MCF 10A (cell line): ENCODE measurements at regions of chr1 and their contacts with region 1.

Region 1: DNA sequence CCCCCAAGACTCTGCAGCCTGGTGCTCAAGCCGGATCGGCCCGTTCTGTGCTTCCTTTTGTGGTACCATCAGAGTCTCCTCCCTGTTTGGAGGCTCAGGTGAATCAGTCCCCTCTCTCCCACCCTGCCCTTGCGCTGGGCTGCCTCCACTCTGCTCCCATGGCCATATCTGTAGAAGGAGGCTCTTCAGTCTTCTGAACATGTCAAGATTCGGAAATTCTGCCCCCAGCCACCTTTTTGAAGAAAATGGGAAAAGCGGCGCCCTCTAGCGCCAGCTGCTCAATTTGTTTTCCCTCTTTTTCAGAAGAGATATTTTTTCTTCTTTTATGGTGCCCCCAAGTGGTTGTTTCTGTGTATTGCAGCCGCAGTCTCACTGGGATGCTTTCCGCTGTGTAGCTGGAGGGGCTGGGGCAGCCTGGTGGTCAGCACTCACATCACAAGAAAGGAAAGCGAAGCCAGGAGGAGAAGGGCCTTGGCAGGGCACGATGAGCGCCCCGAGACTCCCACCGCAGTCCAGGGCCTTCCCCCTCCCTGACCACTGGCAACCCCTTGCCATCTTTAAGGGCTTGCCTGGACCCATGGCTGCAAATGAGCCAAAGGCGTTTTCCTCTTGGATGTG is 58.4 kb upstream of the CACNA1E start:
- DNase-seq: peak; percentile 84
- H3K4me3 Mint-ChIP-seq: peak overlapping the region; percentile 56
- H3K27ac Mint-ChIP-seq: no peak overlapping the region
- H3K4me1 Mint-ChIP-seq: peaks cover 8% of the 10 kb centered on the region
- H3K27me3 Mint-ChIP-seq: peaks cover 38% of the 10 kb centered on the region
- CTCF ChIP-seq: peak; percentile 100

Region 2: DNA sequence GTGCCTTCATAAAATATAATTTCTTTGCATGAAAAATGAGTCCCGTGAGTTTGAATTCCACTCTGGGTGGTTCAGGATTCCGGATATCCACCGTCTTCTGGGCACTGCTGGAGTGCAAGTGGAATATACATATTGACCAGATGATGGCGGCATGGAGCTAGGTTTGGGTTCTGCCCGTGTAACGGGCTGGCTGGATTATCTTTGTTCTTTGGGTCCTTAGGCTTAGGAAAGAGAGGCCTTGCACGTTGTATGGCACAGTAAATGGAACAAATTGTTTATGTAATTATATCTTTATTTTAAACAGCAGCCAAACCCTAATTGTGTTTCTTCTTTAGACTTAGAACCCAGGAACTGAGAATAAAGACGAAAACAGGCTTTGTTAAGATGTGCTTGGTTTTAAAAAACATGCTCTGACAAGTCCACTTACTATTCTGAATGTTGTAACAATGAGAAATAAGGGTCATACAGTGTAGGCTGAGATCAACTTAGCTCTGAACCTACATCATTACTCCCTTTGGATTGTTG is 909.0 kb before region 1 on chr1:
- CTCF ChIA-PET with region 1: interaction called, 3 read pairs
- POLR2A ChIA-PET with region 1: no interaction called
- intact Hi-C with region 1: loop called (anchors 10 kb)
- DNase-seq: peak; percentile 95
- H3K4me3 Mint-ChIP-seq: no peak overlapping the region
- H3K27ac Mint-ChIP-seq: peak overlapping the region; percentile 91
- H3K4me1 Mint-ChIP-seq: peaks cover 7% of the 10 kb centered on the region
- H3K27me3 Mint-ChIP-seq: no peaks in the 10 kb centered on the region
- CTCF ChIP-seq: peak; percentile 98

Region 3: DNA sequence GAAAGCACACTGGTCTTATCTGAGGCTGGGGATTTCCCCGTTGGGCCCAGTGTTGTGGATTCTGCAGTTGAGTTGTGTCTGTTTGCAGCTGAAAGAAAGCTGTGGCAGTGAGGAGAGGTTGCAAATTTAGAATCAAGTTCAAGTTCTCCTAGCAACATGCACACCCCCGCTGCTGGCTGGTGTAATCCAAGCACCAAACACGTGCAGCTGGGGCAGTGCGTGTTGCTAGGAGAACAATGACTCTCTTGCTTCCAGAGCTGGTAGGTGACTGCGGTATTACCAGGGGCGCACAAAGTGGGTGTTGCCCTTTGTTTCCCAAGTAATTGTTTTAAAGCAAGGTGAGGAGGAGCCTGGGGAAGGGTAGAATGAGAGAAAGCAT is 244.9 kb before region 1 on chr1:
- CTCF ChIA-PET with region 1: interaction called, 271 read pairs
- POLR2A ChIA-PET with region 1: interaction called, 3 read pairs
- intact Hi-C with region 1: no loop called
- DNase-seq: peak; percentile 45
- H3K4me3 Mint-ChIP-seq: no peak overlapping the region
- H3K27ac Mint-ChIP-seq: no peak overlapping the region
- H3K4me1 Mint-ChIP-seq: peaks cover 9% of the 10 kb centered on the region
- H3K27me3 Mint-ChIP-seq: peaks cover 24% of the 10 kb centered on the region
- CTCF ChIP-seq: no peak

Region 4: DNA sequence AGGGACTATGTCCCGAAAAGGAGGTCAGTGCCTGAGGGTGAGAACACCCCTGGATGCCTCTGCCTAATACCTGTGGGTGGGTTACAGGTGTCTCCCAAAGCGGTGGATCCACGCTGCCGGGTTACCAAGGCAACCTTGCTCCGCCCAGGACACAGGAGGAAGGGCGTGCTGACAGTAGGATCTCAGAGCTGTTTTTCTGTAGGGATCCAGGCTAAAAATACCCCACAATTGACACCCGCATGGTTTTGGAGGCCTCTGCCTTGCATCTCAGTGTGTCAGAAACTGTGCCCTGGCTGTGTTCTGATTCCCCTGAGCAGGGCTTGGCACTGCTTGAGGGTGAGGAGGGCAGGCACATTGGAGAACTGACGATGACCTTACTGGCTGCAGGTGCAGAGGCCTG is 218.4 kb before region 1 on chr1:
- CTCF ChIA-PET with region 1: interaction called, 11 read pairs
- POLR2A ChIA-PET with region 1: no interaction called
- intact Hi-C with region 1: no loop called
- DNase-seq: no peak
- H3K4me3 Mint-ChIP-seq: no peak overlapping the region
- H3K27ac Mint-ChIP-seq: no peak overlapping the region
- H3K4me1 Mint-ChIP-seq: no peaks in the 10 kb centered on the region
- H3K27me3 Mint-ChIP-seq: no peaks in the 10 kb centered on the region
- CTCF ChIP-seq: no peak

Region 5: DNA sequence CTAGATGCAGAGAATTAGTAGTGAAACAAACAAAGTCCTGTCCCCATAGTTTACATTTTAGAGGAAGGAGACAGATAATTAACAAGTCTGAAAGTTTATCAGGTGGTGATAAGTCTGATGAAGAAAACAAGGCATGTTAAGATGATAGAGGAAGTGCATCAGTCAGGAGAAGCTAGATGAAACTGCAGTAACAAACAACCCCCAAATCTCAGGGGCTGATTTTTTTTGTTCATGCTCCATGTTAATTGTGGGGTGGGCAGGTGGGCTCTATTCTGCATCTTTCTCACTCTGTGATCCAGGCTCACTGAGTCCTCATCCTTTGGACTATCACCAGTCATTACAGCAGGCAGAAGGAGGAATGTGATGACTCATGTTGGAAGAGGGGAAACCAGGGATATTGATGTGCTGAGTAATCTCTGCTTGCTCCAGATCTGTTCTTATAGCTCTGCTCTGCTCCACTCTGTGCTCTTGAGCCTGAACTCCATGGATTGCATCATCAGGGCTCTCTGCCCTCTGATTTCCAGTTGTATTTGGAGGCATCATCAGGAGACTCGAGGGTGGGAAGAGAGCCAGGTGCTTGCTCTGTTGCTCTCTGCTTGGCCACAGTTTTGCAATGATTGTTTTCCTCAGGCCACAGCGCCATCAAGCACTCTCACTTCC is 169.5 kb before region 1 on chr1:
- CTCF ChIA-PET with region 1: interaction called, 7 read pairs
- POLR2A ChIA-PET with region 1: interaction called, 4 read pairs
- intact Hi-C with region 1: loop called (anchors 1 kb)
- DNase-seq: peak; percentile 100
- H3K4me3 Mint-ChIP-seq: no peak overlapping the region
- H3K27ac Mint-ChIP-seq: peak overlapping the region; percentile 80
- H3K4me1 Mint-ChIP-seq: peaks cover 53% of the 10 kb centered on the region
- H3K27me3 Mint-ChIP-seq: peaks cover 15% of the 10 kb centered on the region
- CTCF ChIP-seq: no peak

Region 6: GRCh38 chr1:181442181-181442525 is 17.3 kb after region 1 on chr1:
- CTCF ChIA-PET with region 1: interaction called, 21 read pairs
- POLR2A ChIA-PET with region 1: no interaction called
- intact Hi-C with region 1: no loop called
- DNase-seq: no peak
- H3K4me3 Mint-ChIP-seq: no peak overlapping the region
- H3K27ac Mint-ChIP-seq: no peak overlapping the region
- H3K4me1 Mint-ChIP-seq: peaks cover 6% of the 10 kb centered on the region
- H3K27me3 Mint-ChIP-seq: peaks cover 11% of the 10 kb centered on the region
- CTCF ChIP-seq: no peak